BJ (cell line): ENCODE measurements at regions of chr1 and their contacts with region 1.

Region 1: DNA sequence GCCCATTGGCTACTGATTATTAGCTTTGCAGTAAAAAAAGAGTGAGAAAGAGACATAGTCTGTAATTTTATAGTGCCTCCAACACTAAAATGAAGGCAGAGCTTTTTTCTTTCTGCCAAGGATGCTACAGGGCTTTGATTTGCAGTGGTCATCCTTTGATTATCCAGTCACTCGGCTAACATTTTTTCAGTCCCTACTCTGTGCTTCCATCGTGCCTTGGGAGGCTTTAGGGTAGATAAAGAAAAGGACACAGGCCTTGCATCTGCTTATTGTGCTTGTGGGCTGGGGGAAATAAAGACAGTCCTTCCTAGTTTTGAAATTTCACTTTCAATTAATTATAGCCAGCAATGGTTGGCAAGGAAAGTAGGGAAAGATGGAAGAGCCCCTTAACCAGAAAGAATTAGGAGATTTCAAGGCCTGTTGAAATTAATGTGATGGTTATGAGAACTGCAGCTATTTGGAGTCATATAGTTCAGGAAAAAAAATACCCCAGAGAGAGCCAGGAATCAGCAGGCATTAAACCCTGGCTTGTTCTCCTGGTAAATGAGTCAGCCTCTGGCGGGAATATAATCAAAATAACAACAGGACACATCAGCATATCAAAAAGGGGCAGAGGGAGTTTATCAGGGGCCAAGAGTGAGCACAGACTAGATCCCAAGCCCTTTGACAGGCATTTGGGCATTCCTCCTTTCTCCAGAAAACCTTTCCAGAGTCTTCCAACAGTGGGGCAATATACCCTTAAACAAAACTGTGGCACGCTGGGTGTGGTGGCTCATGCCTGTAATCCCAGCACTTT is 27.4 kb downstream of the CACHD1 start:
- DNase-seq: no peak
- H3K4me3 ChIP-seq: no peak overlapping the region
- H3K27me3 ChIP-seq: no peaks in the 10 kb centered on the region
- CTCF ChIP-seq: no peak

Region 2: GRCh38 chr1:64453688-64454087 is 43.6 kb before region 1 on chr1:
- CTCF ChIA-PET with region 1: no interaction called
- POLR2A ChIA-PET with region 1: no interaction called
- DNase-seq: no peak
- H3K4me3 ChIP-seq: no peak overlapping the region
- H3K27me3 ChIP-seq: peaks cover 3% of the 10 kb centered on the region
- CTCF ChIP-seq: no peak

Region 3: GRCh38 chr1:64476251-64476952 is 20.9 kb before region 1 on chr1:
- CTCF ChIA-PET with region 1: no interaction called
- POLR2A ChIA-PET with region 1: interaction called, 10 read pairs
- DNase-seq: peak; percentile 61
- H3K4me3 ChIP-seq: no peak overlapping the region
- H3K27me3 ChIP-seq: no peaks in the 10 kb centered on the region
- CTCF ChIP-seq: no peak